ENCODE measurements at regions of chr1 and their contacts with region 1.

Region 1: DNA sequence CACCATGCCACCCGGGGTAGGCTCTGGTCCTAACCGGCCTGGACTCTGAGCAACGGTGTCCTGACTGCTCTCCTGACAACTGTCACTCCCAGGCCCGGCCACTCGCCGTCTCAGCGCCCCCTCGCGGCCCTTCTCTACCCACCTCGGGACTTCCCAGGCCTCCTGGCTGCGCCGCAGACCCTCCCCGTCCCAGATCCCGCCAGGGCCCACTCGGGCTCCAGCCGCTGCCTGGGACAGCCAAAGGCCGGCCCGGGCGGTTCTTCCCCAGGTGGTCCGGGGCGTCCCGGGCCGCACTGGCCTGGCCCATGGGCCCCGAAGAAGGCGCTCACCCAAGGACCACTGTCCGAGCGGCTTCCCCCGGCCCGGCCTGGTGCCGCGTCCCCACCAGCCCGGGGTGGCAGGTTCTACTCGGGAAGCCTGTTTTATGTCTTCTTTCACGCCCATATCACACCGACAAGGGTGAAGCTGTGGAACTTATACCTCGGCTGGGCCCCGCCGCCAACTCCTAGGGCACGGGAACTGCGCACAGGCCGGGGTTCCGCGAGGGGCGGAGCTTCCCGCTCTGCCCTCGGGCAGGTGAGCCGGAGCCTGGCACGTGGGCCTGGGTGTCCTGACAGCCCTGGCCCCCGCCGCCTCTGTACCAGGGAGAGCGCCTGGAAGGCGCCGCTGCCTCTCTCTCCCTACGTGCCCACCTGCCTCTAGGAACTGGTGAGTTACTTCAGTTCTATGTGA is 138.3 kb downstream of the TTLL7 start:
- DNase-seq: peak; percentile 89
- ATAC-seq: peak; percentile 98

Region 2: DNA sequence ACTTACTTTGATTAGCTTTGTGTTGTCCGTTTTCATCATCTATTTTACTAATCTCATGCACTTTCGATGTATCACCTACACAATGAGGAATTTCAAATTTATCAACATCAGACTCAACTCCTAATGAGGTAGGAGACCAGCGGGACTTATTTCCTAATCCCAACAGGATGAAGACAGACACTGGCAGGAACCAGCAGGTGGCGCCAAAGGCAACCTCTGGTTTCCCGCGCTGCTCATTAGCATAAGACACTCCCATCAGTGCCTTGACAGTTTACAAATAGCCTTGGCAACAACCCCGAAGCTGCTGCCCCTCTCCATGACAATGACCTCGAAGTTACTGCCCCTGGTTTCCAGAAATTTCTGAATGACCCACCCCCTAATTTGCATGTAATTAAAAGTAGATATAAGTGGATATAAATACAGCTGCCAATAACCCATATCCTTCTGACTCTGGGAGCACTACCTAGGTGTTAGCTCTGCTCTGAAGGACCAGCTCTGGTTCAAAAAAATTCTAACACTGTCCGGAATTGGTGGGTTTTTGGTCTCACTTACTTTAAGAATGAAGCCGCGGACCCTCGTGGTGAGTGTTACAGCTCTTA is 1085.2 kb before region 1 on chr1:
- intact Hi-C with region 1: no loop called
- DNase-seq: peak; percentile 34
- ATAC-seq: no peak

Region 3: DNA sequence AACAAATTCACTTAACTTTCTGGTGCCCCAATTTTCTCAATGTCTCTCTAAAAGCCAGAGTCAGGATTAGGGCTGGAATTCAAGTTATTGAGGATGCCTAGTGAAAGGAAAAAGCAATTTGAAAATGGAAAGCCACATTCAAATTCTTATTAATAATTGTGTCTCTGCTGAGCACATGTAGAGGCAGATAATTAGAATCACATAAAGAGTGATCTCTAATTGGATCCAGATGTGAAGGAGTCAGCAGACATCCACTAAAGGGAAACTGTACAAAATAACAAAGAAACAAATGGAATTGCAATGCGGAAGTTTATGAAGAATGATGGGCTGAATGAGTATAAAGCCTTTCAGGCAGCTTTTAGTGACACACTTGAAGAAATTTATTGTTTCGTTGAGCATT is 344.3 kb before region 1 on chr1:
- intact Hi-C with region 1: loop called (anchors 10 kb)
- DNase-seq: no peak
- ATAC-seq: no peak

Measured in Right ventricle myocardium inferior (tissue), 1 donor.